GM12878 (cell line): ENCODE measurements at regions of chr16 and their contacts with region 1.

Region 1: DNA sequence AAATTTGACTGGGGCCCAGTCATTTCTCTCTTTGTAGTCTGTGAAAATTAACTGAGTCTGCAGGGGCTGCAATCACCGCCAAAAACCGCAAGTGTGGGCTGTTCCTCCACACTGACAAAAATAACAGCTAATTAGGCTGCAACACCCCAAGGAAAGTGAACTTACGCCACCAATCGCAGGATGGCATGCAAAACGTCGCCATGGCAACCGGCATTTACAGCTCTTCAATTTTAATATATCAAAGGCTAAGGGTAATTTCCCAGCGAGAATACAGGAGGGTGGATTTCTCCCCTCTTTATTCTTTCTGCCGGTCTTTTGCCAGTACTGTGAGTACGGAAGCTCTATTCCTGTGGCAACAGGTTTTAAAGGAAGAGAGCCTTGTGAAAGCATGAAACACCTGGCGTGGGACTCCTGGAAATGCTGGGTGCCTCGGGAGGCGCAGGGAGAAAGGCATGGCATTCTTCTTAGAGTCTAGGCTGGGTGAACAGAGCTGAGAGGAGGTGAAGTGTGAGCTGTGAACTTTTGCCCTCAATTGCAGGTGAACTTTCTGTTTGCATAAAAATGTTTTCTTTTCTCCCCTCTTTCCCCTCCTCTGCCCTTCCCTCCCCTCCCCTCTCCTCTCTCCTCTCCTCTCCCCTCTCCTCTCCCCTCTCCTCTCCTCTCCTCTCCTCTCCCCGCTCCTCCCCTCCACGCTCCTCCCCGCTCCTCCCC is 399.7 kb downstream of the XYLT1 start:
- DNase-seq: peak; percentile 98
- ATAC-seq: peak; percentile 81
- H3K4me3 ChIP-seq: peak overlapping the region; percentile 77
- H3K27ac ChIP-seq: peak overlapping the region; percentile 95
- H3K4me1 ChIP-seq: peaks cover 44% of the 10 kb centered on the region
- H3K27me3 ChIP-seq: no peaks in the 10 kb centered on the region
- CTCF ChIP-seq: 0 out of 6 replicates have a peak, but pooled peaks of 1 of the 3 experiments have one; percentile 16
- EP300 ChIP-seq: peak; percentile 89 to 94
- POLR2A ChIP-seq: no peak
- RAD21 ChIP-seq: 0 out of 2 replicates have a peak, but pooled peaks have one; percentile 23

Region 2: DNA sequence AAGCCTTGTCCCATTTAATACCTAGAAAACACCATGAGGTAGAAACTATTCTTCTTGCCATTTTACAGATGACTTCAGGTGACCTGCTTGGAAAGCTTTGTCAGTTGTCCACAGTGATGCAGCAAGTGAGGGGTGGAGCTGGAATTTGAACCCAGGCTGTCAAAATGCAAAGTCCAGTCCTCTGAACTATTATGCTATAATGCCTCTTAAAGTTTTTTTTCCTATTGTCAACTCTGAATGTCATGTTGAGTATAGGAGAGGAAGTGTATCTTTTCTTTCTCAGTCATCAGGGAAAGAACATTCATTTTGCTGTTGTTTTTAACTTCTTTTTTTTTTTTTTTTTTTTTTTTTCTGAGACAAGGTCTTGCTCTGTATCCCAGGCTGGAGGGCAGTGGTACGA is 125.8 kb before region 1 on chr16:
- CTCF ChIA-PET with region 1: no interaction called
- POLR2A ChIA-PET with region 1: interaction called, 4 read pairs
- RAD21 ChIA-PET with region 1: no interaction called
- SMC1A ChIA-PET with region 1: no interaction called
- in situ Hi-C with region 1: no loop called
- intact Hi-C with region 1: loop called (anchors 5 kb)
- DNase-seq: no peak
- ATAC-seq: peak; percentile 66
- H3K4me3 ChIP-seq: no peak overlapping the region
- H3K27ac ChIP-seq: no peak overlapping the region
- H3K4me1 ChIP-seq: peaks cover 5% of the 10 kb centered on the region
- H3K27me3 ChIP-seq: no peaks in the 10 kb centered on the region
- CTCF ChIP-seq: no peak
- EP300 ChIP-seq: 0 out of 4 replicates have a peak, but pooled peaks of 1 of the 2 experiments have one; percentile 13
- POLR2A ChIP-seq: no peak
- RAD21 ChIP-seq: no peak

Region 3: GRCh38 chr16:17002565-17002964 is 68.5 kb before region 1 on chr16:
- CTCF ChIA-PET with region 1: no interaction called
- POLR2A ChIA-PET with region 1: no interaction called
- RAD21 ChIA-PET with region 1: no interaction called
- SMC1A ChIA-PET with region 1: interaction called, 10 read pairs
- in situ Hi-C with region 1: no loop called
- intact Hi-C with region 1: no loop called
- DNase-seq: no peak
- ATAC-seq: peak; percentile 86
- H3K4me3 ChIP-seq: no peak overlapping the region
- H3K27ac ChIP-seq: no peak overlapping the region
- H3K4me1 ChIP-seq: no peaks in the 10 kb centered on the region; the same call in 1 of the 2 replicates
- H3K27me3 ChIP-seq: no peaks in the 10 kb centered on the region
- CTCF ChIP-seq: no peak
- EP300 ChIP-seq: no peak
- POLR2A ChIP-seq: no peak
- RAD21 ChIP-seq: no peak

Region 4: DNA sequence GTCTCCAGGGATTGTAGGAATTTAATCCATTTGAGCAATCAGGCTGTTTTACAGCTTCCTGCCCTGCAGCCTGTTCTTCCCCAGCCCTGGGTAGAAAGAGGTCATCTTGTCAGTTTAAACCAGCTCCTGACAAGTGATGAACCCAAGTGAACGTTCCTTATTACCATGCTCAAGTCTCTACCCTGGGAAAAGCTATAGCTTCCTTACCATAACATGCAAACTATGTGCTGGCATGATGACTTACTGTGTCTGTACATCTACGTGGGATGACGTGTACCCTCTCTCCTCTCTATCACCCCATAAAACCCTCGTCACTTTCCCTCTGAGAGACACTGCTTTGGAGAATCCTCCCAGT is 52.5 kb before region 1 on chr16:
- CTCF ChIA-PET with region 1: interaction called, 15 read pairs
- POLR2A ChIA-PET with region 1: interaction called, 10 read pairs
- RAD21 ChIA-PET with region 1: interaction called, 23 read pairs
- SMC1A ChIA-PET with region 1: interaction called, 179 read pairs
- in situ Hi-C with region 1: no loop called
- intact Hi-C with region 1: loop called (anchors 5 kb)
- DNase-seq: no peak
- ATAC-seq: no peak
- H3K4me3 ChIP-seq: no peak overlapping the region
- H3K27ac ChIP-seq: no peak overlapping the region
- H3K4me1 ChIP-seq: peaks cover 12% of the 10 kb centered on the region
- H3K27me3 ChIP-seq: no peaks in the 10 kb centered on the region
- CTCF ChIP-seq: no peak
- EP300 ChIP-seq: no peak
- POLR2A ChIP-seq: no peak
- RAD21 ChIP-seq: no peak

Region 5: GRCh38 chr16:17053536-17054160 is 17.4 kb before region 1 on chr16:
- CTCF ChIA-PET with region 1: no interaction called
- POLR2A ChIA-PET with region 1: no interaction called
- RAD21 ChIA-PET with region 1: interaction called, 4 read pairs
- SMC1A ChIA-PET with region 1: interaction called, 38 read pairs
- in situ Hi-C with region 1: no loop called
- intact Hi-C with region 1: no loop called
- DNase-seq: no peak
- ATAC-seq: peak; percentile 56
- H3K4me3 ChIP-seq: no peak overlapping the region
- H3K27ac ChIP-seq: no peak overlapping the region
- H3K4me1 ChIP-seq: no peaks in the 10 kb centered on the region
- H3K27me3 ChIP-seq: no peaks in the 10 kb centered on the region
- CTCF ChIP-seq: peak in 2 of 3 experiments; percentile 12 to 36; a peak in 4 of 6 replicates
- EP300 ChIP-seq: no peak
- POLR2A ChIP-seq: no peak
- RAD21 ChIP-seq: peak; percentile 52